Activated CD8-positive, alpha-beta T cell treated with anti-CD3 and anti-CD28 coated beads, Interleukin-2, amount 10 ng/mL, durations not matched to agents 7 days and 5 days (primary cell): ENCODE measurements at regions of chr11 and their contacts with region 1.

Region 1: DNA sequence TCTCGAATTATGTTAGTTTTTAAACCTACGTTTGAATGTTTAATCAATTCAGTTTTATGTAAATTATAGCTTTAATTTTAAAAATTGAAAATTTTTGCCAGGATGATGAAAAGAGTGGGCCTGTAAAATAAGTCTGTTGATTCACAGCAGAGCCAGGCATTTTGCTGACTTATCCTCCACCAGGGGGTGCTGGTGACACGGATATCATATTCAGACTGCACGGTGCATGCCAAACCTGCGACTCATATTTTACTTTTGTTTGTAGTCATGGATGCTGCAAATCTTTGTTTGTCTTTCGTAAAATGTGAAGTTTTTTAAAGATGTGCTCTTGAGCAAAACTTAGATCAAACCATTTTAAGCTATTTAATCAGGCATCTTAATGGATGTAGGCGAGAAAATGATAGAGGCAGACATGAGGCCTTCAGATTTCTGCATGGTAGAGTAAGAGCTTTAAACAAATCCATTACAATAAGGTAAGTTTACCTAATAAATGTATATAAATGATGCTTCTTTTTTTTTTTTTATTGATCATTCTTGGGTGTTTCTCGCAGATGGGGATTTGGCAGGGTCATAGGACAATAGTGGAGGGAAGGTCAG is 3.6 kb upstream of the OR8B3 start:
- DNase-seq: peak; percentile 68
- ATAC-seq: peak; percentile 81
- H3K4me3 Mint-ChIP-seq: no peak overlapping the region
- H3K27ac Mint-ChIP-seq: no peak overlapping the region
- H3K4me1 Mint-ChIP-seq: peaks cover 2% of the 10 kb centered on the region
- H3K27me3 Mint-ChIP-seq: peaks cover 1% of the 10 kb centered on the region

Region 2: DNA sequence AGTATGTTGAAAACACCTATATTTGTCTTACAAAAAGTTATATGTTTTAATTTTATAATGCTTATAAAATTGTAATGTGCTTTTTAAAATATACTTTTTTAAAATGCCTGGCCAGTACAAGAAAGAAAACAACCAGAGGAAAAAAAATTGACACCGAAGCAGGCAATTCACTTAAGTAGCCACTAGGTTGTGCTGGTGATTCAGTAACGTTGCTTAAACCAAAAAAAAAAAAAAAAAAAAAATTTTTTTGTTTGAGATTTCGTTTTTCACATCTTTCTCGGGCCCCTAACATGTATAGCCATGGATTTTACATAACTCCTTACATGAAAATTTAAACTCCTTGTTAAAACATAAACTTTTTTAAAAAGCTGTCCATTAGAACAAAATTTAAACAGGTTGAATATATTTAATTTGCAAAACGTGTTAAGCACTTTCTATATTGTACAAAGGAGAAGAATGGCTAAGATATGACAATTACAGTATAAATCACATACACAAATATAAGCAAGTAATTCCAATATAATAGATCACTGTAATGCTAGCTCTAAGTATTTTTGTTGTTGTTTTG is 13.0 kb after region 1 on chr11:
- CTCF ChIA-PET with region 1: interaction called, 23 read pairs
- POLR2A ChIA-PET with region 1: no interaction called
- DNase-seq: no peak
- ATAC-seq: no peak
- H3K4me3 Mint-ChIP-seq: no peak overlapping the region
- H3K27ac Mint-ChIP-seq: no peak overlapping the region
- H3K4me1 Mint-ChIP-seq: no peaks in the 10 kb centered on the region
- H3K27me3 Mint-ChIP-seq: peaks cover 9% of the 10 kb centered on the region

Region 3: DNA sequence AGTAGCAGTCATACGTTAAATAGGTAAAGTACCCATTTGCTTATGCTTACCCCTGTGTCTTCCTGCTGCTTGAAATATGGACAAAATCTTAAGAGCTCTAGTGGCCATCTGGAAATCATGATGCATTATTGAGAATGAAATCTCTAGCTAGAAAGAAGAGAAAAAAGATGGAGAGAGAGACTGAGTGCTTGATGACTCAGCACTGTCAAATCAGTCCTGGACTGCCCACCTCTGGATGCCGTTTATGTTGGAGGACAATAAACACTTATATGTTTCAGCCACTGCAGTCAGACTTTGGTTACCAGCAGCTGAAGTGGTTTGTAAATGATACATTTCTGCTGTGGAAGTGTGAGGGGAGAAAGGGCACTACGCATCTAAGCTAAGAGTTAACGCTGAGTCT is 18.6 kb after region 1 on chr11:
- CTCF ChIA-PET with region 1: interaction called, 23 read pairs
- POLR2A ChIA-PET with region 1: no interaction called
- DNase-seq: no peak
- ATAC-seq: no peak
- H3K4me3 Mint-ChIP-seq: no peak overlapping the region
- H3K27ac Mint-ChIP-seq: no peak overlapping the region
- H3K4me1 Mint-ChIP-seq: no peaks in the 10 kb centered on the region
- H3K27me3 Mint-ChIP-seq: peaks cover 6% of the 10 kb centered on the region

Region 4: DNA sequence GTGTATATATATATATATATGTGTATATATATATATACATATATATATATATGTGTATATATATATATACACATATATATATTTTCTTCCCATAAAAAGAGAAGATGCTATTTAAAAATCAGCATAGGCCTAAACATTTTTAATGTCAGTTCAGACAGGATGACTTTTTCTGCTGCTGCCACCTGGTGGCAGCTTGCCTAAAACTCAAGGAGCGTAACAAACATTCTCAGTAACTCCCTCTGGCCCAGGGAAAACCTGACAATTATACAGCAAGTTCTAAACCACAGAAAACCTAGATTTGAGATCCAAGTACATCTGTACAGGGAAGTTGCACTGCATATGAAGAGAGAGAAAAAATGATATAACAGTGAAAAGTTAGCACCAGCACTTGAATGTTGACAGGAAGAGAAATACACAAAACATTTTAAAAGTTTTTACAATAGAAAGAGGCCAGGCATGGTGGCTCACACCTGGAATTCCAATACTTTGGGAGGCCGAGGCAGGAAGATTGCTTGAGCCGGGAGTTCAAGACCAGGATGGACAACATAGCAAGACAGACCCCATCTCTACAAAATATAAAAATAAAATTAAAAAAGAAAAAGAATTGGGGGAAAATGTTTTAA is 183.9 kb after region 1 on chr11:
- CTCF ChIA-PET with region 1: interaction called, 14 read pairs
- POLR2A ChIA-PET with region 1: no interaction called
- DNase-seq: peak; percentile 57
- ATAC-seq: no peak
- H3K4me3 Mint-ChIP-seq: no peak overlapping the region
- H3K27ac Mint-ChIP-seq: no peak overlapping the region
- H3K4me1 Mint-ChIP-seq: no peaks in the 10 kb centered on the region
- H3K27me3 Mint-ChIP-seq: peaks cover 19% of the 10 kb centered on the region